Endothelial cell of umbilical vein (primary cell): ENCODE measurements at regions of chr5 and their contacts with region 1.

Region 1: GRCh38 chr5:172939071-172939470 is 20.2 kb upstream of the RPL26L1 start:
- DNase-seq: no peak
- H3K4me3 ChIP-seq: no peak overlapping the region
- H3K27ac ChIP-seq: no peak overlapping the region
- H3K4me1 ChIP-seq: peaks cover 12% of the 10 kb centered on the region
- H3K27me3 ChIP-seq: no peaks in the 10 kb centered on the region
- CTCF ChIP-seq: peak; percentile 23 to 35
- POLR2A ChIP-seq: no peak

Region 2: DNA sequence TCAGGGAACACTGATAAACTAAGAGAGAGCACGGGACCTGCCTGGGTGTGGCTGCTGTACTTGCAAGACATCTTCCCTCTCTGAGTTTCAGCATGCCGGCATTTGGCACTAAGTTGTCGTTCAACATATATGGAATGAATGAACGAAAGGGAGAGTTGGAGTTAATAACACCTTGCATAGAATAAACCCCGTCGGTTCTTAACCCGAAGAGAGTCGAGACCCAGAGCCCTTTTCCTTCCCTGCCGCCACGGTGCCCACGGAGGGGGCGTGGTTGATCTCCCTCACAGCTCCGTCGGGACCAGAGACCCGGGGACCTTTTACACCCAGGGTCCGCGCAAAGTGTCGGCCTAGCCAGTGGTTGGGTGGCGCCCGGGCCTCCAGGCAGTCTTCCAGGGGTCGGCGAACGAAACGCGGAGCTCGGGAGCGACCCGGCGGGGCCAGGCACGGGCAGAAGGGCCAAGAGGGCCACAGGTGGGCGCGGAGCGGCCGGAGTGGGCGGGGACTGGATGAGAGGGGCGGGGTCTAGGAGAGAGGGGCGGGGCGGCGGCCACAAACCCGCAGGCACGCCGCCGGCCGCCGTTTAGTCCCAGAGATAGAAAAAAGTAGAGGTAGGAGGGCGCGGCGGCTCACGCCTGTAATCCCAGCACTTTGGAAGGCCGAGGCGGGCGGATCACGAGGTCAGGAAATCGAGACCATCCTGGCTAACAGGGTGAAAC is 19.4 kb after region 1 on chr5:
- CTCF ChIA-PET with region 1: interaction called, 5 read pairs
- POLR2A ChIA-PET with region 1: no interaction called
- dilution Hi-C with region 1: no loop called
- intact Hi-C with region 1: loop called (anchors 1 kb)
- DNase-seq: peak; percentile 58
- H3K4me3 ChIP-seq: peak overlapping the region; percentile 59 to 66 (median 63)
- H3K27ac ChIP-seq: peak overlapping the region; percentile 59
- H3K4me1 ChIP-seq: peaks cover 22% of the 10 kb centered on the region
- H3K27me3 ChIP-seq: no peaks in the 10 kb centered on the region
- CTCF ChIP-seq: no peak
- POLR2A ChIP-seq: no peak